ENCODE measurements at regions of chr11 and their contacts with region 1.

Region 1: DNA sequence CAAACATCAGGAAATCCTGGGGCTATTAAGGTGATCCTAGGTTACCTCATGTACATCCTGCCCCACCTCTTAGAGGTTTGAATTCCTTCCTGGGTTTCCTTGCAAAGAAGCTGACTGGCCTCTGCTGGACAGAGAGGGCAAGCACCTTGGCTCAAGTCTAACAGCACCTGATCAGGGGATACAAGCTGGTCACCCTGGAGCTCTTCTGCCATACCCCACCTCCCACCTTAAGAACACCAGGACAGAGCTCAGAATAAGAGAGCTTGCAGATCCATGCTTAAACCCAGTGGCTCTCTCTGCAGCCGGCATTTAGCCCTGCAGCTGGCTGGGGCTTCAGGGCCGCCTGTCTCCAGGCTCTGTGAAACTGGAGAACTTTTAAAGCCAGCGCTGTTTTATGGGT is 386.6 kb upstream of the NARS2 start:
- DNase-seq: peak; percentile 46
- ATAC-seq: peak; percentile 37; the same call in 1 of the 2 replicates
- H3K4me3 ChIP-seq: no peak overlapping the region
- H3K27ac ChIP-seq: no peak overlapping the region
- H3K4me1 ChIP-seq: peaks cover 9% of the 10 kb centered on the region
- H3K27me3 ChIP-seq: no peaks in the 10 kb centered on the region
- CTCF ChIP-seq: peak; percentile 50
- POLR2A ChIP-seq: no peak
- RAD21 ChIP-seq: peak; percentile 70

Region 2: DNA sequence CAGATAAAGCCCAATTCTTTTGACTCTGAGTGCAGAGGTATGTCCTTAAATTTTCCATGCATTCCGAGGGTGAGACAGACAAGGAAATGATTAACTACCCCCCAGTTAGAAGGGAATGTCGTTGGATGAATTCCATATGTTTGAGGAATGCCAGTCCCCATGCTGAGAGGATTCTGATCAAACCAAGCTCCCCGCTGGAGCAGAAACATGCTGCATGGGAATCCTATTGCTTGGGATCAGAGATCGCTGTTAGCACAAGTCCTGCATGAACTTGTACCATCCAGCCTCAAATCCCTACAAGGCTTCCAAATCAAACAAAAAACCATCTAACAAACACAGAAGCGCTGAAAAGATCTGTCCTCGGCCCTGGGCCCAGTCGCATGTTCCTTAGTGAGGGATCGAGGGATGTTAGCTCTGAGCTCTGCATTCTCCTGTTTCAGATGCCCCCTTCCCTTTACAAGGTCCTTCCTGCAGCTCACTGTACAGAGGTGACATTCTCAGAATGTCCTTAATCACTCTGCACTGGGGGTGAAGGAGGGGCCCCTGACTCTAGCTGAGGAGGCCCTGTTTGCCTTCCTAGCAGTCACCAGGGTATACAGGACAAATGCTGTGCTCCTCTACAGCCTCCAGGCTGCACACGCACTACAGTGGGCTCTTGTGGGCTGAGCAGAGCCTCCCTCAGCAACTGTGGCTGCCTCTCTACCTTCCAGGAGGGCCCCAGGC is 126.2 kb after region 1 on chr11:
- CTCF ChIA-PET with region 1: no interaction called
- POLR2A ChIA-PET with region 1: no interaction called
- dilution Hi-C with region 1: no loop called
- in situ Hi-C with region 1: no loop called
- intact Hi-C with region 1: loop called (anchors 5 kb)
- DNase-seq: peak; percentile 62
- ATAC-seq: peak; percentile 69
- H3K4me3 ChIP-seq: no peak overlapping the region
- H3K27ac ChIP-seq: peak overlapping the region; percentile 62; the same call in 1 of the 2 replicates
- H3K4me1 ChIP-seq: peaks cover 22% of the 10 kb centered on the region
- H3K27me3 ChIP-seq: no peaks in the 10 kb centered on the region
- CTCF ChIP-seq: no peak
- POLR2A ChIP-seq: no peak
- RAD21 ChIP-seq: no peak